Right ventricle myocardium inferior (tissue), 1 donor: ENCODE measurements at regions of chr12 and their contacts with region 1.

Region 1: GRCh38 chr12:67720351-67720856 is 71.9 kb downstream of the DYRK2 start:
- DNase-seq: no peak
- ATAC-seq: peak; percentile 62

Region 2: DNA sequence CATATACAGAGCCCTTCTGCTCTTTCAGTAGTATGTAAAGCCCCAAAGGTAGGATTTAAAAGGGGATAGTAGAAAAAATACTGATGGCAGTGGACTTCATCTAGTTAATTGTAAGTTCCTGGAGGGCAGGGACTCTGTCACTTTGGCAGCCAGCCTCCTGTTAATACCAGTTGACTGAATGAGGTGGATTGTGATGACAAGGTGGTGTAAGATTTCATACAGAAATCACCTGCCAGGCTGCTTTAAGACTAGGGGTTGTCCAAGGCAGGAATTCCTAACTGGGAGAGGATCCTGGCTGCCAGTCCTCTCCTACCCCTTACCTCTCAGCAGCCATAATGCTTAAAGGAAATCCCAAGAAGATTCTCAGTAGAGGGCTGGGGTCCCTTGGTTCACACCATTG is 64.6 kb before region 1 on chr12:
- intact Hi-C with region 1: loop called (anchors 2 kb)
- DNase-seq: no peak
- ATAC-seq: peak; percentile 55

Region 3: GRCh38 chr12:67937836-67938235 is 217.4 kb after region 1 on chr12:
- intact Hi-C with region 1: loop called (anchors 2 kb)
- DNase-seq: no peak
- ATAC-seq: no peak